Cardiac septum (tissue), 1 donor: ENCODE measurements at regions of chr10 and their contacts with region 1.

Region 1: GRCh38 chr10:89217057-89217990 is 10.2 kb upstream of the CH25H start:
- DNase-seq: no peak

Region 2: GRCh38 chr10:89029785-89030437 is 187.4 kb before region 1 on chr10:
- intact Hi-C with region 1: loop called (anchors 1 kb)
- DNase-seq: peak; percentile 83

Region 3: GRCh38 chr10:89090756-89091445 is 126.4 kb before region 1 on chr10:
- intact Hi-C with region 1: no loop called
- DNase-seq: no peak